ENCODE measurements at regions of chr9 and their contacts with region 1.

Region 1: DNA sequence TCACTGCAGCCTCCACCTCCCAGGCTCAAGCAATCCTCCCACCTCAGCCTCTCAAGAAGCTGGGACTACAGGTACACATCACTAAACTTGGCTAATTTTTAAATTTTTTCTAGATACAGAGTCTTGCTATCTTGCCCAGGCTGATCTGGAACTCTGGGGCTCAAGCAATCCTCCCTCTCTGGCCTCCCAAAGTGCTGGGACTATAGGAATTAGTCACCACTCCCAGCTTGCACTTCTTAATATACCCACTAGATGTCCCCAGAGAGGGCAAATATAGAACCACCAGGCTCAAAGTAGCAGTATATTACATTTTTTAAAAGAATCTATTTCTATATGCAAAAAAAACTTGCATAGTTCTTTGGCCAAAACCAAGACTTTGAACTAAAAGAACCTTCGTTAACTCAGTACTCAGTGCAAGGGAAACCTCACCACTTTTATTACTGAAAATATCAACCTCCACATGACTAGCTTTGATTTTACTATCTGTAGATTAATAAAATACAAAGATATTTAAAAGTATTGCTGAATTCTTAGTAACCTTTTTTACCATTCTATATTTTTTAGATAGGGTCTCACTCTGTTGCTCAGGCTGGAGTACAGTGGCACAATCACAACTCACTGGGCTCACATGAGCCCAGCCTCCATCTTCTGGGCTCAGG is 25.8 kb upstream of the HSD17B3 start:
- DNase-seq: peak; percentile 38
- H3K4me3 ChIP-seq: no peak overlapping the region
- H3K27ac ChIP-seq: no peak overlapping the region
- H3K4me1 ChIP-seq: peaks cover 9% of the 10 kb centered on the region
- H3K27me3 ChIP-seq: no peaks in the 10 kb centered on the region
- CTCF ChIP-seq: peak; percentile 80 to 86

Region 2: GRCh38 chr9:96398582-96399324 is 70.9 kb after region 1 on chr9:
- CTCF ChIA-PET with region 1: no interaction called
- dilution Hi-C with region 1: loop called (anchors 5 kb)
- in situ Hi-C with region 1: no loop called
- intact Hi-C with region 1: no loop called
- DNase-seq: no peak
- H3K4me3 ChIP-seq: no peak overlapping the region
- H3K27ac ChIP-seq: no peak overlapping the region
- H3K4me1 ChIP-seq: no peaks in the 10 kb centered on the region
- H3K27me3 ChIP-seq: no peaks in the 10 kb centered on the region
- CTCF ChIP-seq: no peak

Region 3: DNA sequence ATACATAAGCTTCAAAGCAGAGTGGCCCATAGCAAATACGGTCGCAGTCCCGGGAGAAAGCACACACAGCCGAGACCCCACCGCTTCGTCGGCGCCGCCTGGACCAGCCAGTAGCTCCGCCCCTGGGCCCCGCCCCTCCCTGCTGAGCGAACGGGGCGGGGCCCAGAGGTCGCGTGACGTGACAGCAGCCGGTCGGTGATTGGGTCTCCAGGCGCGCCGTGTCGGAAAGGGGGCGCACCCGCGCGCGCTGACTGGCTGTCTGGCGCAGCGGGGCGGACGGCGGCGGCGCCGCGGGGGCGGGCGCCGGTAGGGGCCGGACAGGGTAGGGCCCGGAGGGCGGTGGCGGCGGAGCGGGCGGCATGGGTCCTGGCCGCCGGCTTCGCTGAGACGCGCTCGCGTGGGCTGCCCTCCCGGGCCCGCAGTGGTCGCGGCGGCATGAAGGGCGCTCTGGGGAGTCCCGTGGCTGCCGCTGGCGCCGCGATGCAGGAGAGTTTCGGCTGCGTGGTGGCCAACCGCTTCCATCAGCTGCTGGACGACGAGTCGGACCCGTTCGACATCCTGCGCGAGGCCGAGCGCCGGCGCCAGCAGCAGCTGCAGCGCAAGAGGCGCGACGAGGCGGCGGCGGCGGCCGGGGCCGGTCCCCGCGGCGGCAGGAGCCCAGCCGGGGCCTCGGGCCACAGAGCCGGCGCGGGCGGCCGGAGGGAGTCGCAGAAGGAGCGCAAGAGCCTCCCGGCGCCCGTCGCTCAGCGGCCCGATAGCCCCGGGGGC is 122.2 kb after region 1 on chr9 and contains the start of gene HABP4:
- CTCF ChIA-PET with region 1: no interaction called
- dilution Hi-C with region 1: no loop called
- in situ Hi-C with region 1: no loop called
- intact Hi-C with region 1: loop called (anchors 2 kb)
- DNase-seq: peak; percentile 91
- H3K4me3 ChIP-seq: peak within 1 kb of the TSS; percentile 68 to 91 (median 90)
- H3K27ac ChIP-seq: peak within 1 kb of the TSS; percentile 56
- H3K4me1 ChIP-seq: peaks cover 8% of the 10 kb centered on the region
- H3K27me3 ChIP-seq: no peaks in the 10 kb centered on the region
- CTCF ChIP-seq: no peak
- total RNA-seq, gene HABP4: 7.7 to 9.6 TPM

Region 4: DNA sequence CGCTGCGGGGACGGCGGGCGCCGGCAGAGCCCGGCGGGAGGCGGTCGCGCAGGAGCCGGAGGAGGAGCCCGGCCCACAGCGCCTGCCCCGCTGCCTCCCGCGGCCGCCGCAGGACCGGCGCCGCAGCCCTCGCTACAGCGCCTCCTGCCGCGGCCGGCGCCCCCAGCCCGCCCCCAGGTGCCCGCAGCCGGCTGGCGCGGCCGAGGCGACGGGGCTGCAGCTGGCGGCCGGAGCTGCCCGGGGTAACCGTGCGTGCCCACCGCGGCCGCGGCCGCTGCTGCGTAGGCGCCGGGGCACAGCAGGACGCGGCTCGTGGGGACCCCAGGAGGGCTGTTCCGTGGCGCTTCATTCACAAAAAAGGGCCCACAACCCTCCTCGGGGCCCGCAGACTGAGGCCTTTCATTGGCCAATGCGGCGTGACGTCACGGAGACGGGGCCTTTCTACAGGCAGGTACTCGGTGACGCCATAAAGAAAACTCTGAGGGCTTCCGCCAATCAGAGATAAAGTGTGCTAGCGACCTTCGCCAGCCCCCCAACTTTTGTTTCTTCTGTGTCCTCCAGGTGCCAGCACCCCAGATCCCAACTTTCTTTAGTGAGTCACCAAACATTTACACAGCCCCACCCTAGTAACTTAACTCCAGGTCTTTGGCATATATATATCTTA is 291.8 kb after region 1 on chr9 and contains the start of gene CDC14B:
- CTCF ChIA-PET with region 1: no interaction called
- dilution Hi-C with region 1: no loop called
- in situ Hi-C with region 1: no loop called
- intact Hi-C with region 1: loop called (anchors 1 kb)
- DNase-seq: peak; percentile 88
- H3K4me3 ChIP-seq: peak within 1 kb of the TSS; percentile 66 to 70 (median 70)
- H3K27ac ChIP-seq: peak within 1 kb of the TSS; percentile 19
- H3K4me1 ChIP-seq: peaks cover 8% of the 10 kb centered on the region
- H3K27me3 ChIP-seq: no peaks in the 10 kb centered on the region
- CTCF ChIP-seq: peak in 1 of 2 donors; percentile 26
- total RNA-seq, gene CDC14B: 9.4 to 14.5 TPM

Region 5: DNA sequence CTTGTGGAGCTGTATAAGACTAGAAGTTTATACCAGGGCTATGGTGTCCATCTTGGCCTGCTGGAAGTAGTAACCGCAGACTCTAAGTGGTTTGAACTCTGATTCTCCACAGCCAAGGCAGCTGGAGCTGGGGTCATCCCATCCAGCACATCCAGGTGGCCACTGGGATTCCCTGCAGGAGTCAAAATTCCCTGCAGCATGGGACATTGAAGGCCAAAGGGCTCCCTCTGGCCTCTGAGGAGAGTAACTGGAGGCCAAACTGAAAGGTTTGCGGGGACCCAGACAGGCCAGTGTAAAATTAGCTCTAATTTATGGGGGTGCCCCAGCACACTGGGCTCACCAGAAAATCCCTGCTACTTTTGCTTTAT is 339.5 kb after region 1 on chr9:
- CTCF ChIA-PET with region 1: no interaction called
- dilution Hi-C with region 1: no loop called
- in situ Hi-C with region 1: no loop called
- intact Hi-C with region 1: loop called (anchors 1 kb)
- DNase-seq: no peak
- H3K4me3 ChIP-seq: no peak overlapping the region
- H3K27ac ChIP-seq: no peak overlapping the region
- H3K4me1 ChIP-seq: no peaks in the 10 kb centered on the region
- H3K27me3 ChIP-seq: no peaks in the 10 kb centered on the region
- CTCF ChIP-seq: no peak